Sigmoid colon (tissue), 7 donors: ENCODE measurements at regions of chr11 and their contacts with region 1.

Region 1: GRCh38 chr11:64643256-64643881 is 52.3 kb downstream of the SLC22A12 start:
- DNase-seq: peak; percentile 82
- H3K4me3 ChIP-seq: peak overlapping the region; percentile 60 to 76 (median 67)
- H3K27ac ChIP-seq: peak overlapping the region in 3 of 4 donors; percentile 62 to 76 (median 67)
- H3K4me1 ChIP-seq: peaks cover 0 to 37% (median 30%) of the 10 kb centered on the region in 4 donors
- H3K27me3 ChIP-seq: peaks cover 0 to 29% (median 5%) of the 10 kb centered on the region in 3 donors
- CTCF ChIP-seq: no peak
- EP300 ChIP-seq: no peak
- POLR2A ChIP-seq: no peak

Region 2: DNA sequence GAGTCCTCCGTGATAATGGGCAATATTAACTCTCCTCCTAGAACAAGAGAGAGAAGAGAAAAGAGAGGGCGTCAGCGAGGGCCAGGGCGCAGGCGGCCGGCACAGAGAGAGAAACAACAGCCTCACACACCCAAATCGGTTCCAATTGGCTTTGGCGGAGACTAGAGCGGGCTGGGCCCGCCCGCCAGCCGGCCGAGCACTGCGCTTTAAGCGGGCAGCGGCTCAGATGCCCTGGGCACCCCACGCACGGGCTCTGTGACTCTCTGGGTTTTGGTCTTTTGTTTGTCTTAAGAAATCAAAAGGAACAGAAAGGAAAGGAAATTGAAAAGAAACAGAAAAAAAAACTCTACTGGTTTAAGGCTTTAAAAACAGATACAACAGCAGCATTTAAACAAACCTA is 35.3 kb before region 1 on chr11:
- intact Hi-C with region 1: loop called (anchors 2 kb)
- DNase-seq: no peak
- H3K4me3 ChIP-seq: peak overlapping the region; percentile 12 to 45 (median 36)
- H3K27ac ChIP-seq: peak overlapping the region in 3 of 4 donors; percentile 34 to 63 (median 57)
- H3K4me1 ChIP-seq: peaks cover 0 to 8% (median 5%) of the 10 kb centered on the region in 4 donors
- H3K27me3 ChIP-seq: no peaks in the 10 kb centered on the region
- CTCF ChIP-seq: no peak
- EP300 ChIP-seq: no peak
- POLR2A ChIP-seq: no peak